ENCODE measurements at regions of chr14 and their contacts with region 1.

Region 1: GRCh38 chr14:56422703-56423213 is 156.8 kb upstream of the TMEM260 start:
- DNase-seq: peak; percentile 11 to 61
- ATAC-seq: peak; percentile 85 to 94 (median 90)
- H3K4me3 ChIP-seq: no peak overlapping the region
- H3K27ac ChIP-seq: no peak overlapping the region
- H3K4me1 ChIP-seq: peaks cover 0 to 22% (median 8%) of the 10 kb centered on the region in 9 donors
- H3K27me3 ChIP-seq: no peaks in the 10 kb centered on the region
- CTCF ChIP-seq: peak; percentile 45 to 85 (median 69)

Region 2: DNA sequence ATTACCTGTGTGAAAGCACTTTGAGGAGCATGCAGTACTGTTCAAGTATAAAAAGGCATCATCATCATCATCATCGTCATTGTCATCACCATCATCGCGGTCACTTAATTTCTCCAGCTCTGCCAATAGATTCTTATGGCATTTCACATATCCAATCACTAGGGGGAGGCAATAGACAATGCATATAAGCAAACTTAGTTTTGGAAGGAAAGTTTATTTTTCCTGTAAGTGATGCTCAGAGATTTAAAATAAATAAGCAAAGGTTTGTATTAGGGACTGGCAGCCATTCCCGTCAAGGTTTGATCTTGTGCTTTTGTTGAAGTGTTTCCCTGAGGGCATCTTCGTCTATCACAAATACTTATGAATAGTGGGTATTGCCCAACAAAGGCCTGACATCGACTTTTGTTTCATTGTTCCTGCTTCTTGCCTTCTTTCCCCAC is 715.4 kb before region 1 on chr14:
- intact Hi-C with region 1: loop called in 1 of 10 experiments (anchors 5 kb)
- DNase-seq: no peak
- ATAC-seq: peak in 3 of 8 donors; percentile 47 to 56 (median 47)
- H3K4me3 ChIP-seq: no peak overlapping the region
- H3K27ac ChIP-seq: no peak overlapping the region
- H3K4me1 ChIP-seq: peaks cover 0 to 13% (median 5%) of the 10 kb centered on the region in 9 donors
- H3K27me3 ChIP-seq: no peaks in the 10 kb centered on the region
- CTCF ChIP-seq: peak; percentile 43 to 77 (median 66)

Region 3: GRCh38 chr14:55731881-55732498 is 690.8 kb before region 1 on chr14:
- intact Hi-C with region 1: loop called in 3 of 10 experiments (anchors 5 to 10 kb)
- DNase-seq: peak in 1 of 2 donors; percentile 47
- ATAC-seq: peak in 2 of 8 donors; percentile 20 to 33
- H3K4me3 ChIP-seq: no peak overlapping the region
- H3K27ac ChIP-seq: no peak overlapping the region
- H3K4me1 ChIP-seq: no peaks in the 10 kb centered on the region
- H3K27me3 ChIP-seq: no peaks in the 10 kb centered on the region
- CTCF ChIP-seq: peak; percentile 26 to 76 (median 71)

Region 4: GRCh38 chr14:56216626-56217379 is 206.0 kb before region 1 on chr14:
- intact Hi-C with region 1: loop called in 1 of 10 experiments (anchors 10 kb)
- DNase-seq: peak; percentile 60 to 62
- ATAC-seq: peak in 4 of 8 donors; percentile 20 to 63 (median 35)
- H3K4me3 ChIP-seq: no peak overlapping the region
- H3K27ac ChIP-seq: peak overlapping the region in 2 of 10 donors; percentile 11 to 16
- H3K4me1 ChIP-seq: peaks cover 11 to 69% (median 52%) of the 10 kb centered on the region in 9 donors
- H3K27me3 ChIP-seq: no peaks in the 10 kb centered on the region
- CTCF ChIP-seq: no peak

Region 5: GRCh38 chr14:56247468-56248200 is 175.1 kb before region 1 on chr14:
- intact Hi-C with region 1: loop called in 1 of 10 experiments (anchors 10 kb)
- DNase-seq: no peak
- ATAC-seq: no peak
- H3K4me3 ChIP-seq: no peak overlapping the region
- H3K27ac ChIP-seq: no peak overlapping the region
- H3K4me1 ChIP-seq: peaks cover 0 to 9% (median 0%) of the 10 kb centered on the region in 9 donors
- H3K27me3 ChIP-seq: no peaks in the 10 kb centered on the region
- CTCF ChIP-seq: peak in 8 of 9 donors; percentile 8 to 47 (median 36)